ENCODE measurements at regions of chr10 and their contacts with region 1.

Region 1: DNA sequence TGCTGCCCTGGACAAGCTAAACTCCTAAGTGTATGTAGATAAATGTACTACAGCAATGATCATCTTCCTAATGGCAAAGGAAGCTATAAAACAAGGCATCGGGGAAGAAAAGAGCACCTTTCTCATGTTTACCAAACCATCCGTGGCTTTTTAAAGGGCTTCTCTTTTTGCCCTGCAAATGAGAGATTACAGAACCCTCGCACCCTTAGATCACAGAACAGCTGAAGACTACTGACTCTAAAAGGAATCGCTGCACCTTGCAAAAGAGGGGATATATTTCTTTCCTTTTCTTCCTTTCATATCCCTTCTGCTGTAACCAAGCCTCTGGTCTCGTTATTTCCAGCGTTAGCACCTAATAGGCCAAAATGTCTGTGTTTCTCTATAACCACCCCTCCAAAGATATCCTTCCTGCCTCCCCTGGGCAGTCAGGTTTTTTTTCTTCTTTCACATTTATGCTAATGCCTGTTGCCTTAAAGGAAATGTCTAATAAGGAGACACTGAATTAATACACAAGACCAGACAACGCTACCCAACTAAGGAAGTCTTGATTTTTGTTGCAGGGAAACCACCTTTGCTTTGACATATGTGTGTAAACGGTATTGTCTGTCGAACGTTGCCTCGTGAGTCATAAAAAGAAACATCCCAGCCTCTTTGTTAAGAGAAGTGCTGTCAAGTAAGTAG is 10.5 kb downstream of the ST8SIA6 start:
- DNase-seq: peak; percentile 61
- H3K4me3 Mint-ChIP-seq: peak overlapping the region; percentile 46
- H3K27ac Mint-ChIP-seq: peak overlapping the region; percentile 28
- H3K4me1 Mint-ChIP-seq: peaks cover 16% of the 10 kb centered on the region
- H3K27me3 Mint-ChIP-seq: peaks cover 3% of the 10 kb centered on the region

Region 2: GRCh38 chr10:17001961-17002749 is 441.7 kb before region 1 on chr10:
- CTCF ChIA-PET with region 1: no interaction called
- intact Hi-C with region 1: loop called (anchors 2 kb)
- DNase-seq: peak; percentile 44
- H3K4me3 Mint-ChIP-seq: no peak overlapping the region
- H3K27ac Mint-ChIP-seq: peak overlapping the region; percentile 5
- H3K4me1 Mint-ChIP-seq: peaks cover 57% of the 10 kb centered on the region
- H3K27me3 Mint-ChIP-seq: peaks cover 5% of the 10 kb centered on the region

Region 3: GRCh38 chr10:17454161-17455014 is 10.5 kb after region 1 on chr10 and contains the start of gene ST8SIA6:
- CTCF ChIA-PET with region 1: interaction called, 3 read pairs
- intact Hi-C with region 1: loop called (anchors 1 kb)
- DNase-seq: peak; percentile 62
- H3K4me3 Mint-ChIP-seq: peak within 1 kb of the TSS; percentile 80
- H3K27ac Mint-ChIP-seq: no peak within 1 kb of the TSS
- H3K4me1 Mint-ChIP-seq: peaks cover 17% of the 10 kb centered on the region
- H3K27me3 Mint-ChIP-seq: peaks cover 12% of the 10 kb centered on the region
- total RNA-seq, gene ST8SIA6: not detected

Region 4: DNA sequence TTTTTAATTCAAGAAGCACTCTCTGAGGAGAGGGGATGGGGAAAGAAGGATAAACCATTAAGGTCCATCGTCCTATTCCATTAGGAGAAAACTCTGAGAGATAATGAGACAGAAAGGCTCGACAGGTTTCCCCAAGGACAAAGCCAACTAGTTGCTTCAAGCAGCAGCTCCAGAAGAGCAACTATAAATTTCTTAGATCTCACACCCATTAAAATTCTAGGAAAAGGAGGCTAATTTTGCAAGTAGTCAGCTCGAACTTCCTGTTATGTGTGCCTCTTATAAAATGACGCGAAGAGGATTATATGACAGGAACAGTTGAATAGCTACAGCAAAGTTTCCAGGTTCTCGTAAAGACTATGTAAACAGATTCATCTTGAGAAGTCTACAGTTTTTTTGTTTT is 62.5 kb after region 1 on chr10:
- CTCF ChIA-PET with region 1: interaction called, 3 read pairs
- intact Hi-C with region 1: loop called (anchors 1 kb)
- DNase-seq: no peak
- H3K4me3 Mint-ChIP-seq: no peak overlapping the region
- H3K27ac Mint-ChIP-seq: peak overlapping the region; percentile 61
- H3K4me1 Mint-ChIP-seq: peaks cover 33% of the 10 kb centered on the region
- H3K27me3 Mint-ChIP-seq: no peaks in the 10 kb centered on the region

Region 5: GRCh38 chr10:17512341-17513001 is 68.6 kb after region 1 on chr10:
- CTCF ChIA-PET with region 1: interaction called, 3 read pairs
- intact Hi-C with region 1: loop called (anchors 1 kb)
- DNase-seq: no peak
- H3K4me3 Mint-ChIP-seq: no peak overlapping the region
- H3K27ac Mint-ChIP-seq: no peak overlapping the region
- H3K4me1 Mint-ChIP-seq: peaks cover 18% of the 10 kb centered on the region
- H3K27me3 Mint-ChIP-seq: no peaks in the 10 kb centered on the region

Region 6: DNA sequence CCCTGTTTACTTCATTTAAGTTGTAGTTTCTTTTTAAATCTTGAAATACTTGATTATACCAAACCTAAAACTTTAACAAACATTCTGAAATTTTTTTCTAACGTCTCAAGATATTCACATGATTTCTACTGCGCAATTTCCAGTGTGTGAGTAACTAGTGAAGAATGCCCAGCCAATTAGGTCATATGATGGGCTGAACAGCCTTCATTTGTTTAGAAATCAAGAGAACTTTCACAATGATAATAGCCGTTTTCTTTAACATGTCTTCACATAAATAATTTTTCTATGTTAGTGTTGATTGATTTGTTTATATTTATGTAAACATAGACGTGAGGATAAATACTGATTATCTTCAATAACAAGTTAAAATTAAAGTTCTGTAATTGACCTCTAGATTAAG is 221.9 kb after region 1 on chr10:
- CTCF ChIA-PET with region 1: no interaction called
- intact Hi-C with region 1: no loop called
- DNase-seq: no peak
- H3K4me3 Mint-ChIP-seq: no peak overlapping the region
- H3K27ac Mint-ChIP-seq: no peak overlapping the region
- H3K4me1 Mint-ChIP-seq: peaks cover 65% of the 10 kb centered on the region
- H3K27me3 Mint-ChIP-seq: no peaks in the 10 kb centered on the region

Region 7: GRCh38 chr10:17725703-17726102 is 281.9 kb after region 1 on chr10:
- CTCF ChIA-PET with region 1: no interaction called
- intact Hi-C with region 1: no loop called
- DNase-seq: no peak
- H3K4me3 Mint-ChIP-seq: no peak overlapping the region
- H3K27ac Mint-ChIP-seq: no peak overlapping the region
- H3K4me1 Mint-ChIP-seq: no peaks in the 10 kb centered on the region
- H3K27me3 Mint-ChIP-seq: no peaks in the 10 kb centered on the region